ENCODE measurements at regions of chr7 and their contacts with region 1.

Region 1: GRCh38 chr7:117072620-117073118 is 119.4 kb downstream of the ST7 start:
- DNase-seq: peak; percentile 60
- ATAC-seq: peak; percentile 75

Region 2: DNA sequence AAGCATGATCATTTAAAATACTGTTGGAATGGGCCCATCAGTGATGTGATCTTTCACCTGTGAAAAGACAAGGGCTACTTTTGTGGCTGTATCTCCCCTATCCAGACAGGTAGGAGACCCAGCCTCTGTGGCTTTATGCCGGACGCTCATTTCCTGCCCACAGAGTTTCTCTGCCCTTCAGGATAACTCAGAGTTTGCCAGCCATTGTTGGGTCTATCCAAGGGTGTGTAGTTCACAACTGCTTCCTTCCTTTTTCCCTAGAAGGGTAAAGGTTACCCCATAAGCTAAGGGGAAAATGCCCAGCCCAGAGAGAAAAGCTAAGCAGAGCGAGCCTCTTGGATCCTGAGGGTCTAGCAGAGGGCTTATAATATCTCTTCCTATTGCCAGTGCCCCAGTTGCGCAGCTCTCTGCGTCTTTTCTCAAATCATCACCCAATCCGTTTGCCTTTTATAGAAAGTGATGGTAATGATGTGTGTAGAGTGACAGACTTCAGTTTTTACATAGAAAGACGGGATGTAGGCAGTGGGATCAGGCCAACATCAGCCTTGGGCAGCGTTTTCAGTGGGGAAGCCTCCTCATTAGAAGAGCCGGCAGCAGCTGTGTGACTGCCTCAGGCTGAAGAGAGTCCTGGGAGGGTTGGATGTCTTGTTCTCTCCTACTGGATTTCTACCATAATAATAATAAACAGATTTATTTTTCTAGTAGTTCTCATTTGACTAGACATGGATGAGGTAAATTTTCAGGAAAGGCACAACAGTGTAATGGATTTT is 320.2 kb before region 1 on chr7:
- intact Hi-C with region 1: no loop called
- DNase-seq: no peak
- ATAC-seq: no peak

Region 3: DNA sequence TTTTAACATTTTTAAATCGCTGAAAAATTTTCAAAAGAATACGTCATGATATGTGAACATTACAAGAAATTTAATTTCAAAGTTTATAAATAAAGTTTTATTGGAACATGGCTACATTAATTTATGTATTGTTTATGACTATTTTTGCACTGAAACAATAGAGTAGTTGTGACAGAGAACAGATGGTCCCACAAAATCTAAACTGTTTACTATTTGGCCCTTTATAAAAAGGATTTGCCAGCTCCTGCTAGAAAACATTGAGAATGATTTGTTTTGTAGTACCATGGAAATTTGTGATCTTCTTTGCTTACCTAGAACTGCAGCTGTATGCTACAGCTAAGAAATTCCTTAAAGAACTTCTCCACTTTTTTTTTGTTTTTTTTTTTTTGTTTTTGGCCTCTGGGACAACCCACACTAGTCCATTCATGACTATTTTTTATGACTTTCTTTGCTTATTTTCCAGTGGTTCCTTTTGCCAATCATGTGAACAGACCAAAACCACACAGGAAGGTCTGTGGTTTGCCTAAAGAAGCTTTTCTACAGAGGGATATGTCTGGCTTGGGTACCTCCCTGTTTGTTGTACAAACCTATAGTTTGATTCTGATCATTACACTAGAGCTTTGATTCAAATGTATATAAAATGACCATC is 63.7 kb before region 1 on chr7:
- intact Hi-C with region 1: loop called (anchors 10 kb)
- DNase-seq: no peak
- ATAC-seq: no peak